HEK293 (cell line): ENCODE measurements at regions of chr11 and their contacts with region 1.

Region 1: GRCh38 chr11:9678576-9678975 is 14.7 kb downstream of the SWAP70 start:
- H3K4me3 ChIP-seq: no peak overlapping the region
- H3K27ac ChIP-seq: no peak overlapping the region
- H3K4me1 ChIP-seq: no peaks in the 10 kb centered on the region
- CTCF ChIP-seq: no peak

Region 2: DNA sequence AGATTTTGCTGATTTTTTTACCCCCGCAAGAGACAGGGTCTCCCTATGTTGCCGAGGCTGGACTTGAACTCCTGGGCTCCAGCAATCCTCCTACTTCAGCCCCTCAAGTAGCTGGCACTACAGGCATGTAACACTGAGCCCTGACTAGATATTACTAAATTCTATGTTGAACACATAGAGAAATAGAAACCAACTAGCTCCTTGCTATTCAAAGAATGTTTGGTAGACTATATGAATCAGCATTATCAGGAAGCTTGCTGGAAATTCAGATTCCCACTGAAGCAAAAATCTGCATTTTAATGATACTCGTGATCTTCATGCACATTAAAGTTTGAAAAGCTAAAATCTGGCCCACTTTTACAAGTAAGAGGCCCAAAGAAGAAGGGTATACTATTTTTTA is 376.1 kb before region 1 on chr11:
- CTCF ChIA-PET with region 1: no interaction called
- POLR2A ChIA-PET with region 1: no interaction called
- H3K4me3 ChIP-seq: no peak overlapping the region
- H3K27ac ChIP-seq: no peak overlapping the region
- H3K4me1 ChIP-seq: no peaks in the 10 kb centered on the region
- CTCF ChIP-seq: no peak

Region 3: GRCh38 chr11:9550191-9550628 is 128.4 kb before region 1 on chr11:
- CTCF ChIA-PET with region 1: no interaction called
- POLR2A ChIA-PET with region 1: no interaction called
- H3K4me3 ChIP-seq: no peak overlapping the region
- H3K27ac ChIP-seq: no peak overlapping the region
- H3K4me1 ChIP-seq: no peaks in the 10 kb centered on the region
- CTCF ChIP-seq: no peak

Region 4: GRCh38 chr11:9663699-9664275 is 14.8 kb before region 1 on chr11 and contains the start of gene SWAP70:
- CTCF ChIA-PET with region 1: no interaction called
- POLR2A ChIA-PET with region 1: interaction called, 14 read pairs
- H3K4me3 ChIP-seq: peak within 1 kb of the TSS; percentile 90
- H3K27ac ChIP-seq: peak within 1 kb of the TSS; percentile 28; the same call in 1 of the 2 replicates
- H3K4me1 ChIP-seq: no peaks in the 10 kb centered on the region
- CTCF ChIP-seq: no peak

Region 5: DNA sequence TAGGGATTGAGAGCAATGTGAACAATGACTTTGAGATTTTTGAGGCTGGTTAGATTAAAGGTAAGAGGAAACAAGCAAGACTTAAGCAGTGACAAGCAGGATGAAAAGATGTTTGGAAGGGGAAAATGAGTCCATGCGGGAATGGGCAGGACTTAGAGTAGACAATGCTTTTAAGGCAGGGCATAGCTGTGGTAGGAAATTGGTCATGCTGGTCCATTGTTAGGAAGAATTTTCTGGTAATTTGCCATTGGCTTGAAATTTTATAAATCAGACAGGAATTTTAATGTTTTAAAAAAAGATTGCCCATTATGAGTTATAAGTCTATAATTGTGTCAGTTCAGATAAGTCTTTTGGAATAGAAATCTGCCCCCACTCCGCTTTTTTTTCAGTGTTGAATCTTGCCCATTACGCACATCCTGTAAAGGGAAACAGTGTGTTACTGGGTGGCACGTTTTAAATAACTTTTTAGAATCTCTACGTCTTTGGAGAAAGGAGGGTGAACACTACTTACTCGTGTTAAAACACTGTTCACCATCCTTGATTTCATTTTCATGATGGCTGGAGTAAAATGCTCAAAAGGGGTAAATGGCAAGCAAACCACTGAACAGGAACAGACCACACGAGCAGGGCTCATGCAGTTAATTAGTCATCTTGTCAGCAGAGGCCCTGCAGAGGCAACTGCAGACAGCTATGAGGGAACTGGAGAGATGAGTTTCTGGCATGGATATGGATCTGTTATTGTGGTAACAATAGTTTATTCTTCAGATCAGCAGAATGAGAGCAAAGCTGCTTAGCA is 10.3 kb after region 1 on chr11:
- CTCF ChIA-PET with region 1: no interaction called
- POLR2A ChIA-PET with region 1: no interaction called
- H3K4me3 ChIP-seq: no peak overlapping the region
- H3K27ac ChIP-seq: no peak overlapping the region
- H3K4me1 ChIP-seq: 0 out of 2 replicates have a peak, but pooled peaks cover 5% of the 10 kb centered on the region
- CTCF ChIP-seq: no peak

Region 6: DNA sequence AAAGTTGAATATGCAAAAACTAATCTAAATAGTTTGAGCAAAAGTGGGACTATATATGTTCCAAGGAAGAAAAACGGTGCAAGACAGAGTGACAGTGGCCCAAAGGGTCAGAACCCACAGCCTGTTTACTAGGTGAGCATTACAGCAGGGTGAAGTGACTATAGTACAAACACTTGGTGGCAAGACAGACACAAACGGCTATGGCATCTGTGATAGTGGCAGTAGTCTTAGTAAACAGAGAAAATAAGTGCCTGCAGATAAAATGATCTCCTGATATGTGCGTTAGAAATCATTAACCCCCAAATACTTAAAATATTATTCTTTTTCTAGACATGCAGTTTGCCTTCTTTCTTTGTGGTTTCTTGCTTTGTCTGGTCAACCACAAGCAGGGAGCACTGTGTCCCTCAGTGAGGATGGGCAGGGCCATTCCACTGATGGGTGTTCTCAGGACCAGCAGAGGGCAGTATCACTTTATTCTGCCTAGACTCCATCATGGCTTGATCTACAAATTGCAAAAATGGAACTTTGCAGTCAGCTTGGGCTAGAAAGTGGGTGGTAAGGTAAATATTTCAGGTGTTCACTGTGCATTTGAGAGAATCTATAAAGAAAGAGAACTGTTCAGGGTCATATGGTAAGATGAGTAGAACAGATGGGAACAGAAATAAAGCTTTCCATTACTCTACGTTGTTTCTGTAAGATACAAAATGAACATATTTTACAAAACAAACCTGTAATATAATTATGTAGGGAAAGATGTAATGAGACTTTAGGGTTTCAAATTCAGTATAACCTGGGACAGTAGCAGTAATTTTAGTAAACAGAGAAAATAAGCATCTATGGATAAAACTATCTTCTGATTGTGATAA is 183.5 kb after region 1 on chr11:
- CTCF ChIA-PET with region 1: no interaction called
- POLR2A ChIA-PET with region 1: no interaction called
- H3K4me3 ChIP-seq: no peak overlapping the region
- H3K27ac ChIP-seq: no peak overlapping the region
- H3K4me1 ChIP-seq: peaks cover 12% of the 10 kb centered on the region; the same call in 1 of the 2 replicates
- CTCF ChIP-seq: no peak